HCT116 (cell line): ENCODE measurements at regions of chr2 and their contacts with region 1.

Region 1: GRCh38 chr2:9142551-9143263 is 63.9 kb upstream of the ASAP2 start:
- DNase-seq: peak; percentile 72
- ATAC-seq: peak; percentile 94
- H3K4me3 ChIP-seq: peak overlapping the region; percentile 30 to 38
- H3K27ac ChIP-seq: no peak overlapping the region
- H3K4me1 ChIP-seq: peaks cover 18 to 46% of the 10 kb centered on the region in 2 experiments; a peak in 3 of 4 replicates
- H3K27me3 ChIP-seq: no peaks in the 10 kb centered on the region
- CTCF ChIP-seq: peak in 2 of 3 experiments; percentile 90 to 98; a peak in 4 of 6 replicates
- POLR2A ChIP-seq: no peak
- RAD21 ChIP-seq: no peak

Region 2: GRCh38 chr2:7427293-7428060 is 1715.2 kb before region 1 on chr2:
- CTCF ChIA-PET with region 1: interaction called, 4 read pairs
- POLR2A ChIA-PET with region 1: no interaction called
- RAD21 ChIA-PET with region 1: no interaction called
- intact Hi-C with region 1: loop called (anchors 5 kb)
- DNase-seq: peak; percentile 38
- ATAC-seq: peak; percentile 73
- H3K4me3 ChIP-seq: no peak overlapping the region
- H3K27ac ChIP-seq: no peak overlapping the region
- H3K4me1 ChIP-seq: no peaks in the 10 kb centered on the region
- H3K27me3 ChIP-seq: peaks cover 29% of the 10 kb centered on the region
- CTCF ChIP-seq: peak; percentile 44 to 76 (median 56); a peak in 4 of 6 replicates
- POLR2A ChIP-seq: no peak
- RAD21 ChIP-seq: peak; percentile 81

Region 3: GRCh38 chr2:8872821-8873432 is 269.8 kb before region 1 on chr2:
- CTCF ChIA-PET with region 1: interaction called, 15 read pairs
- POLR2A ChIA-PET with region 1: no interaction called
- RAD21 ChIA-PET with region 1: interaction called, 4 to 5 read pairs
- intact Hi-C with region 1: loop called (anchors 1 kb)
- DNase-seq: peak; percentile 50
- ATAC-seq: peak; percentile 75
- H3K4me3 ChIP-seq: no peak overlapping the region
- H3K27ac ChIP-seq: no peak overlapping the region
- H3K4me1 ChIP-seq: no peaks in the 10 kb centered on the region
- H3K27me3 ChIP-seq: no peaks in the 10 kb centered on the region
- CTCF ChIP-seq: peak; percentile 62 to 90 (median 69)
- POLR2A ChIP-seq: no peak
- RAD21 ChIP-seq: peak; percentile 87

Region 4: GRCh38 chr2:9287400-9288043 is 144.8 kb after region 1 on chr2:
- CTCF ChIA-PET with region 1: no interaction called
- POLR2A ChIA-PET with region 1: no interaction called
- RAD21 ChIA-PET with region 1: no interaction called
- intact Hi-C with region 1: loop called (anchors 2 kb)
- DNase-seq: peak; percentile 97
- ATAC-seq: peak; percentile 86
- H3K4me3 ChIP-seq: peak overlapping the region in 1 of 2 experiments; percentile 47; a peak in 2 of 4 replicates
- H3K27ac ChIP-seq: peak overlapping the region; percentile 72
- H3K4me1 ChIP-seq: peaks cover 38 to 60% of the 10 kb centered on the region in 2 experiments
- H3K27me3 ChIP-seq: no peaks in the 10 kb centered on the region
- CTCF ChIP-seq: no peak
- POLR2A ChIP-seq: no peak
- RAD21 ChIP-seq: peak; percentile 31; the same call in 1 of the 2 replicates

Region 5: GRCh38 chr2:9370746-9371145 is 228.0 kb after region 1 on chr2:
- CTCF ChIA-PET with region 1: interaction called, 25 read pairs
- POLR2A ChIA-PET with region 1: no interaction called
- RAD21 ChIA-PET with region 1: interaction called, 6 to 7 read pairs
- intact Hi-C with region 1: loop called (anchors 1 kb)
- DNase-seq: no peak
- ATAC-seq: no peak
- H3K4me3 ChIP-seq: no peak overlapping the region
- H3K27ac ChIP-seq: no peak overlapping the region
- H3K4me1 ChIP-seq: no peaks in the 10 kb centered on the region
- H3K27me3 ChIP-seq: no peaks in the 10 kb centered on the region
- CTCF ChIP-seq: no peak
- POLR2A ChIP-seq: no peak
- RAD21 ChIP-seq: no peak

Region 6: DNA sequence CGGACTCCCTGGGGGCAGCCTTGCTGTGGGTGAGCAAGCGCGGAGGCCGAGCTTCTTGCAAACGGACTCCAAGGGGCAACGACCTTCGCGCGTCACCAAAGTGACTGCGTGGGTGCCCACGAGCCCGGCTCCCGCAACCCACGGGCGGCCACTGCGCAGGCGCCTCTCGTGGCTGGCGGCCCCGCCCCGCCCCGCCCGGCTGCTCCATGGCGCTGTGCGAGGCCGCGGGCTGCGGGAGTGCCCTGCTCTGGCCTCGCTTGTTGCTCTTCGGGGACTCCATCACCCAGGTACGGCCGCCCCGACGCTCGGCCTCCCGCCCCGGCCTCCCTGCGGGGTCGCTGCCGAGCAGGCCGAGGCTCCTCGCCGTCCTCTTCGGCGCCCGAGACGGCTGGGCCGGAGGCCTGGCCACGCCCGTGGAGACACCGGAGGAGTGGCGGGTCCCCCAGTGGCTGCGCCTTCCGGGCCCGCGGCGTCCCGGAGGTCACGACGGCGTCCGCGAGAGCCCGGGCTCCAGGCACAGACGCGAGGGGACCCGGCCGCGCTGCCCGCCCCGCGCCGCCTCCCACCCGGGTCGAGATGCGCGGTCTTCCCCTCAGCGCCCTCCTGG is 331.8 kb after region 1 on chr2 and contains the start of gene IAH1:
- CTCF ChIA-PET with region 1: interaction called, 3 read pairs
- POLR2A ChIA-PET with region 1: no interaction called
- RAD21 ChIA-PET with region 1: no interaction called
- intact Hi-C with region 1: loop called (anchors 10 kb)
- DNase-seq: no peak
- ATAC-seq: peak; percentile 82
- H3K4me3 ChIP-seq: peak within 1 kb of the TSS; percentile 53 to 80
- H3K27ac ChIP-seq: peak within 1 kb of the TSS; percentile 88
- H3K4me1 ChIP-seq: peaks cover 5 to 22% of the 10 kb centered on the region in 2 experiments; a peak in 3 of 4 replicates
- H3K27me3 ChIP-seq: no peaks in the 10 kb centered on the region
- CTCF ChIP-seq: no peak
- POLR2A ChIP-seq: peak; percentile 38
- RAD21 ChIP-seq: no peak
- total RNA-seq, gene IAH1: 35.1 TPM

Region 7: DNA sequence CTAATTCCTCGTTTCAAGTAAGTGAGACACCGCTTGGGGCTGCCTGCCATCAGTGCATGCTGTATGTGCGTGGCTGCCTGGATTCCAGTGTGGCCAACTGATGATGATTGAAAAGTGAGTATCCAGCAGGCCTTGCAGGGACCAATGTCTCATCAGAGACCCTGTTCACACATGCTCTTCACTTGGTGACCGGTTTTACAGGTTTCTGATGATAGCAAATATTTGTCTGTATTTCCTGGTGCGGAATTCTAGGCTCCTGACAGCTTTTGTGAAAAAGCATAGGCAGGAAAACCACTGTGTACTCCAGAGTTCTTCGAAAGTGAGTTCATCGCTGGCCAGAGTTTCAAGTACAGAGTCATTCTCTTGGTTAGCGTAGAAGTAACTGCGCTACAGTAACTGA is 501.9 kb after region 1 on chr2:
- CTCF ChIA-PET with region 1: no interaction called
- POLR2A ChIA-PET with region 1: no interaction called
- RAD21 ChIA-PET with region 1: no interaction called
- intact Hi-C with region 1: no loop called
- DNase-seq: no peak
- ATAC-seq: no peak
- H3K4me3 ChIP-seq: no peak overlapping the region
- H3K27ac ChIP-seq: no peak overlapping the region
- H3K4me1 ChIP-seq: peaks cover 0 to 7% of the 10 kb centered on the region in 2 experiments; a peak in 1 of 4 replicates
- H3K27me3 ChIP-seq: no peaks in the 10 kb centered on the region; the same call in 1 of the 2 replicates
- CTCF ChIP-seq: no peak
- POLR2A ChIP-seq: no peak
- RAD21 ChIP-seq: no peak